Activated T-helper 2 cell treated with anti-CD3 and anti-CD28 coated beads, Interferon-gamma antibody, Interleukin-2, Interleukin-4, amounts not matched to agents 10 μg/mL and 5 μg/mL and 100 μg/mL, durations not matched to agents 14 hours and 24 hours and 36 hours (primary cell): ENCODE measurements at regions of chr9 and their contacts with region 1.

Region 1: GRCh38 chr9:4984621-4985385 is at the start of gene JAK2:
- DNase-seq: peak; percentile 91
- H3K4me3 Mint-ChIP-seq: no peak within 1 kb of the TSS
- H3K27ac Mint-ChIP-seq: peak within 1 kb of the TSS; percentile 96
- H3K4me1 Mint-ChIP-seq: peaks cover 45% of the 10 kb centered on the region
- H3K27me3 Mint-ChIP-seq: no peaks in the 10 kb centered on the region
- total RNA-seq, gene JAK2: 29.4 and 32.3 TPM in 2 replicates

Region 2: GRCh38 chr9:4740638-4741364 is 244.0 kb before region 1 on chr9 and contains the start of gene AK3:
- intact Hi-C with region 1: loop called (anchors 5 kb)
- DNase-seq: peak; percentile 85
- H3K4me3 Mint-ChIP-seq: peak within 1 kb of the TSS; percentile 90
- H3K27ac Mint-ChIP-seq: peak within 1 kb of the TSS; percentile 89
- H3K4me1 Mint-ChIP-seq: peaks cover 29% of the 10 kb centered on the region
- H3K27me3 Mint-ChIP-seq: no peaks in the 10 kb centered on the region
- total RNA-seq, gene AK3: 33.9 and 34.5 TPM in 2 replicates

Region 3: GRCh38 chr9:4832786-4833579 is 151.8 kb before region 1 on chr9:
- intact Hi-C with region 1: loop called (anchors 2 kb)
- DNase-seq: peak; percentile 27
- H3K4me3 Mint-ChIP-seq: no peak overlapping the region
- H3K27ac Mint-ChIP-seq: peak overlapping the region; percentile 93
- H3K4me1 Mint-ChIP-seq: peaks cover 47% of the 10 kb centered on the region
- H3K27me3 Mint-ChIP-seq: no peaks in the 10 kb centered on the region

Region 4: GRCh38 chr9:4970970-4971641 is 13.7 kb before region 1 on chr9:
- intact Hi-C with region 1: loop called (anchors 1 kb)
- DNase-seq: peak; percentile 57
- H3K4me3 Mint-ChIP-seq: no peak overlapping the region
- H3K27ac Mint-ChIP-seq: no peak overlapping the region
- H3K4me1 Mint-ChIP-seq: peaks cover 29% of the 10 kb centered on the region
- H3K27me3 Mint-ChIP-seq: no peaks in the 10 kb centered on the region

Region 5: GRCh38 chr9:5013374-5013773 is 28.6 kb after region 1 on chr9:
- intact Hi-C with region 1: no loop called
- DNase-seq: no peak
- H3K4me3 Mint-ChIP-seq: no peak overlapping the region
- H3K27ac Mint-ChIP-seq: no peak overlapping the region
- H3K4me1 Mint-ChIP-seq: peaks cover 35% of the 10 kb centered on the region
- H3K27me3 Mint-ChIP-seq: no peaks in the 10 kb centered on the region

Region 6: DNA sequence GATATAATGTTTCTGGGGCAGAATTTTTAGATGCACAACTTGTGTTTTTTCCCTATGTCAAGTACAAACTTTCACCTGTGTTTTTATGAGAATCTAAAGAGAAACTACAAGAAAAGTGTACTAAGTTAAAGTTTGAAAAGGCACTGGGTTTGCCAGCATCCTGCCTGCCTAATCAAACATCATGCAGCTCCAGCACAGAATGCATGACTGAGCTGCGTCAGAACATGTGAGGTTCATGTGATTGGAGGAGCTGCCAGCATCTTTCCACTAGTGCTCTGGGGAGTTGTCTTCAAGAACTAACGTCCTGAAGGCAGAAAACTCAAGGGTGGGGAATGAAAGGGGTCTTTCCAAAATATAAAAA is 598.0 kb after region 1 on chr9:
- intact Hi-C with region 1: loop called (anchors 5 kb)
- DNase-seq: peak; percentile 46
- H3K4me3 Mint-ChIP-seq: no peak overlapping the region
- H3K27ac Mint-ChIP-seq: peak overlapping the region; percentile 88
- H3K4me1 Mint-ChIP-seq: peaks cover 69% of the 10 kb centered on the region
- H3K27me3 Mint-ChIP-seq: no peaks in the 10 kb centered on the region